ENCODE measurements at regions of chr19 and their contacts with region 1.

Region 1: DNA sequence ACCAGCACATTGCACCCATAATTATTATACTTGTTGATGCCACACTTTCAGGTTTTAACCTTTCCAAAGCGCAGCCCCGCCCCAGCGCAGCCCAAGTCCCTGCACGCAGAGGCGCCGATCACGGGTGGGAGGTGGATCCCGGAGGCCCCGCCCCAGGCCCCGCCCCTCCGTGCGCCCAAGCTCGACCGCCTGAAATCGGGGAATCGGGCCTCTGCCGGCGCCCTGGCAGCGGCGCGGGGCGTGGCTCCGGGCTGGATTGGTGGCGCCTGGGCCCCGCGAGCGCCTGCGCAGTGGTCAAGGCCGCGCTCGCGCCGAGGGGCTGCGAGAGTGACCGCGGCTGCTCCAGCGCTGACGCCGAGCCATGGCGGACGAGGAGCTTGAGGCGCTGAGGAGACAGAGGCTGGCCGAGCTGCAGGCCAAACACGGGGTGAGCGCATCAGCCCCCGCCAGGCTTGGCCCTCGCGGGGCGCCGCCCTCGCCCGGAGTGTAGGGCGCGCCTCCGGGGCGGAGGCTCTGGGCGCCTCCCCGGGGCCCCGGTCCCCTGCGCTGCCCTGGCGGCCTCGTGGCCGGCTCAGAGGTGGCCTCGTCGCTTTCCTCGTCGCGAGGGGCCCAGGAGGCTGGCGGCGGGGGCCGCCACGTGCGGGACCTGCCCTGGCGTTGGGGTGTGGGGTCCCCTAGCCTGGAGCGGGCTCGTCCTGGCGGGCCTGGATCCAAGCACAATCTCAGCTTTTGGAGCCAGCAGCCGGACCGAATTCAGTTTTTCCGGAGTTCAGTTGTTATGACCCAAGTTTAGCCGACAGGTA is at the start of gene PDCD5:
- DNase-seq: peak; percentile 97
- H3K4me3 ChIP-seq: peak within 1 kb of the TSS; percentile 72 to 82 (median 77)
- H3K27ac ChIP-seq: peak within 1 kb of the TSS; percentile 86 to 94 (median 90)
- H3K4me1 ChIP-seq: peaks cover 0 to 16% (median 12%) of the 10 kb centered on the region in 4 donors
- H3K27me3 ChIP-seq: no peaks in the 10 kb centered on the region
- CTCF ChIP-seq: no peak
- EP300 ChIP-seq: no peak
- POLR2A ChIP-seq: peak; percentile 21 to 28
- total RNA-seq, gene PDCD5: 143 to 216 (median 159) TPM

Region 2: DNA sequence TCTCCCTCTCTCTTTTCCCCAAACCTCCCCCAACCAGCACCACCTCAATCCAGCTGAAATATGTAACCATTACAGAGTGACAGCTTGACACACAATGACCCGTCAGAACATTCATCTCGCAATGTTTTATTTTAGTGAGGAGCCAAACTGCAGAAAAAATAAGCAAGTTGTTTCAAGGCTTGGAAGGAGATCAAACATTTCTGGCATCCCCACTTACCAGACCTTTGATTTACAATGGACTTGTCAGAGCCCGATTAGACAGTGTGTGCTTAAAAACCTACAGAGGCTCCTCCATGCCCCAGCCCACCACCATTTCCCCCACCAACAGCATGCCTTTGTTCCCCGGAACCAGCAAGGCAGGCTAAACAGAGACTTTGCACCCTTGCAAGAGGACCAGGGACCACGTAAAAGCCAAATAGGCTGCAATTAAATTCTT is 618.5 kb before region 1 on chr19:
- intact Hi-C with region 1: loop called (anchors 10 kb)
- DNase-seq: no peak
- H3K4me3 ChIP-seq: no peak overlapping the region
- H3K27ac ChIP-seq: peak overlapping the region in 3 of 4 donors; percentile 36 to 68 (median 52)
- H3K4me1 ChIP-seq: peaks cover 0 to 54% (median 40%) of the 10 kb centered on the region in 4 donors
- H3K27me3 ChIP-seq: no peaks in the 10 kb centered on the region
- CTCF ChIP-seq: no peak
- EP300 ChIP-seq: no peak
- POLR2A ChIP-seq: no peak

Region 3: DNA sequence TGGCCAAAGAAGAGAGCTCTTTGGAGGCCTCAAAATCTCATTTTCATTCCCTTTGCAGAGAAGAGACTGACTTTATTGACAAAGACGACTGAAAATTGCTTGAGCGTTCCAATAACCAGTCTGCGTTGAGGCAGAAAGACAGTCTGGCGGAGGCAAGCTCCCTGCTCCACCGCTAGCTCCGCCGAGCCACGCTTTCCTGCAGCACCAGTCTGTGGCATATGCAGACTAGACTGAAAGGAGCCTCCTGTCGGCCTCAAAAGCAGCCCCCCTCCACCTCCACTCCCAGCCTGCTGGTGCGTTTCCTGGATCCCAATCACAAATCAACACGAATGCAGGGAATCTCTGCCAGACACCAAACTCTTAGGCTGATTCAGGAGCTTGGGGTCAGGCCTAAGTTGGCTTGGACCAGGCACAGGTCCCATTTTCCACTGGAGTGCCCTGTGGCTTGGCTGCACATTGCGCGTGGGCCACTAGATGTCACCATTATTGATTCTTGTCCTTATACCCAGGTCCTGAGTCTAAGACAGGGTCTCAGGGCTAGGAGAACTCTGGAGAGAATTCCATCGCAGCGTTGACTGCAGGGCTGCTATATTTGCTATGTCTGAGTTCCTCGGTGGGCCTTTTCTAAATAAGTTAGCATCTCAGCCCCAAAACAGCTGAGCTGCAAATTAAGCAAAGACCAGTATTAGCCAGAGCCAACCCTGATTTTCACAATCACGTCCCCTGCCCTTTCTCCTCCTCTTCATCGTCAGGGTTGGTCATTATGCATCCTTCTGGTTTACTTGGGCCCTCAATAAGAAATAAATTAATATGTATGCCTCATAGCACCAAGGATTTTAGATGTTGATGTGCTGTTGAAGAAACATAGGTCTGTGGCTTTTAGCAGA is 240.9 kb before region 1 on chr19:
- intact Hi-C with region 1: loop called (anchors 5 kb)
- DNase-seq: peak; percentile 70
- H3K4me3 ChIP-seq: no peak overlapping the region
- H3K27ac ChIP-seq: peak overlapping the region; percentile 2 to 54 (median 43)
- H3K4me1 ChIP-seq: peaks cover 0 to 25% (median 18%) of the 10 kb centered on the region in 4 donors
- H3K27me3 ChIP-seq: no peaks in the 10 kb centered on the region
- CTCF ChIP-seq: peak; percentile 15 to 65 (median 43)
- EP300 ChIP-seq: no peak
- POLR2A ChIP-seq: no peak

Region 4: GRCh38 chr19:32405431-32406161 is 175.5 kb before region 1 on chr19 and contains the start of gene DPY19L3:
- intact Hi-C with region 1: loop called (anchors 2 kb)
- DNase-seq: peak; percentile 98
- H3K4me3 ChIP-seq: peak within 1 kb of the TSS; percentile 71 to 97 (median 84)
- H3K27ac ChIP-seq: peak within 1 kb of the TSS; percentile 96 to 100 (median 98)
- H3K4me1 ChIP-seq: peaks cover 0 to 23% (median 15%) of the 10 kb centered on the region in 4 donors
- H3K27me3 ChIP-seq: no peaks in the 10 kb centered on the region
- CTCF ChIP-seq: no peak
- EP300 ChIP-seq: peak in 1 of 4 donors; percentile 15
- POLR2A ChIP-seq: peak; percentile 86 to 89
- total RNA-seq, gene DPY19L3: 11.4 to 33.5 (median 25.0) TPM

Region 5: DNA sequence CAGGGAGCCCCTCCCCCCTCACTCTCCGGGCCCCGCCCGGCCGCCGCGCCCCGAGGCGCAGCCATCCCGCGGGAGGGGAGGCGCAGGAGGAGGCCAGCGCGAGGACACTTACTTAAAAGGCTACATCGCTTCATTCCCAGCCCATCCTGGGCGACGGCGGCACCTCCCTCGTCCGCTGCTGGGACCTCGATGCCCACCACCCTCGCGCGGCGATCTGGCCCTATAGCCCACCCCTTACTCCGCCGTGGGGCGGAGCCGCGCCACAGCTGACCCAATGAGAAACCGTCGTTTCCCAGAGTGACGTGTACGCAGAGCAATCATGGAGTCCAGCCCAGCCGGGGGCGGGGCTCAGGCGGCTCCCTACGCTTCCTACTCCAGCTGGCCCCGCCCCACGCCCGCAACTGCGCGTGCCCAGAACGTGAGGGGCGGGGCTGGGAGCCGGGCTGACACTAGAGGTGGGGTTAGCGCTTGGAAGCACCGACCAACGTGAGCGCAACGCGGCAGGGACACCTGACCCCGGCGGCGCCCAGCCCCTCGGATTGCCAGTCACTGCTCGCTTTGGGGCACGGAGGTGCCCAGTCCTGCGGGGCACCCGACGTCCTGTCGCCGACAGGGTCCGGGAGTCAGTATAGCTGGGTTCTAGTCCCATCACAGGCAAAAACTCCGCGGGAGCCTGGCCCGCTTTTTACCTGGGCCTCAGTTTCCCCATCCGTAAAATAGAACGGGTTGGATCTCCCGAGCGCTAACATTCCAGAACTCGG is 94.0 kb after region 1 on chr19 and contains the start of gene ANKRD27:
- intact Hi-C with region 1: loop called (anchors 5 kb)
- DNase-seq: peak; percentile 99
- H3K4me3 ChIP-seq: peak within 1 kb of the TSS; percentile 74 to 99 (median 85)
- H3K27ac ChIP-seq: peak within 1 kb of the TSS; percentile 87 to 93 (median 88)
- H3K4me1 ChIP-seq: peaks cover 0 to 40% (median 34%) of the 10 kb centered on the region in 4 donors
- H3K27me3 ChIP-seq: peaks cover 0 to 23% (median 12%) of the 10 kb centered on the region in 3 donors
- CTCF ChIP-seq: no peak
- EP300 ChIP-seq: peak in 1 of 4 donors; percentile 6
- POLR2A ChIP-seq: peak; percentile 30 to 45
- total RNA-seq, gene ANKRD27: 34.1 to 48.5 (median 40.4) TPM